Activated CD4-positive, alpha-beta T cell treated with anti-CD3 and anti-CD28 coated beads, Interleukin-2, amount 10 ng/mL, durations not matched to agents 7 days and 5 days (primary cell): ENCODE measurements at regions of chr1 and their contacts with region 1.

Region 1: GRCh38 chr1:229479660-229480399 is 28.3 kb downstream of the NUP133 start:
- DNase-seq: no peak
- H3K4me3 Mint-ChIP-seq: no peak overlapping the region
- H3K27ac Mint-ChIP-seq: no peak overlapping the region
- H3K4me1 Mint-ChIP-seq: peaks cover 11% of the 10 kb centered on the region
- H3K27me3 Mint-ChIP-seq: no peaks in the 10 kb centered on the region

Region 2: GRCh38 chr1:228983231-228983660 is 496.6 kb before region 1 on chr1:
- CTCF ChIA-PET with region 1: no interaction called
- POLR2A ChIA-PET with region 1: interaction called, 10 read pairs
- DNase-seq: no peak
- H3K4me3 Mint-ChIP-seq: no peak overlapping the region
- H3K27ac Mint-ChIP-seq: no peak overlapping the region
- H3K4me1 Mint-ChIP-seq: no peaks in the 10 kb centered on the region
- H3K27me3 Mint-ChIP-seq: no peaks in the 10 kb centered on the region

Region 3: GRCh38 chr1:229456016-229456415 is 23.8 kb before region 1 on chr1:
- CTCF ChIA-PET with region 1: no interaction called
- POLR2A ChIA-PET with region 1: no interaction called
- DNase-seq: no peak
- H3K4me3 Mint-ChIP-seq: no peak overlapping the region
- H3K27ac Mint-ChIP-seq: no peak overlapping the region
- H3K4me1 Mint-ChIP-seq: peaks cover 6% of the 10 kb centered on the region
- H3K27me3 Mint-ChIP-seq: no peaks in the 10 kb centered on the region